CD14-positive monocyte (primary cell): ENCODE measurements at regions of chr18 and their contacts with region 1.

Region 1: GRCh38 chr18:6795307-6795706 is 65.8 kb downstream of the ARHGAP28 start:
- DNase-seq: no peak
- H3K4me3 ChIP-seq: no peak overlapping the region
- H3K4me3 Mint-ChIP-seq: no peak overlapping the region
- H3K27ac ChIP-seq: no peak overlapping the region
- H3K27ac Mint-ChIP-seq: no peak overlapping the region
- H3K4me1 ChIP-seq: no peaks in the 10 kb centered on the region
- H3K4me1 Mint-ChIP-seq: no peaks in the 10 kb centered on the region
- H3K27me3 ChIP-seq: no peaks in the 10 kb centered on the region
- H3K27me3 Mint-ChIP-seq: no peaks in the 10 kb centered on the region
- CTCF ChIP-seq: no peak

Region 2: DNA sequence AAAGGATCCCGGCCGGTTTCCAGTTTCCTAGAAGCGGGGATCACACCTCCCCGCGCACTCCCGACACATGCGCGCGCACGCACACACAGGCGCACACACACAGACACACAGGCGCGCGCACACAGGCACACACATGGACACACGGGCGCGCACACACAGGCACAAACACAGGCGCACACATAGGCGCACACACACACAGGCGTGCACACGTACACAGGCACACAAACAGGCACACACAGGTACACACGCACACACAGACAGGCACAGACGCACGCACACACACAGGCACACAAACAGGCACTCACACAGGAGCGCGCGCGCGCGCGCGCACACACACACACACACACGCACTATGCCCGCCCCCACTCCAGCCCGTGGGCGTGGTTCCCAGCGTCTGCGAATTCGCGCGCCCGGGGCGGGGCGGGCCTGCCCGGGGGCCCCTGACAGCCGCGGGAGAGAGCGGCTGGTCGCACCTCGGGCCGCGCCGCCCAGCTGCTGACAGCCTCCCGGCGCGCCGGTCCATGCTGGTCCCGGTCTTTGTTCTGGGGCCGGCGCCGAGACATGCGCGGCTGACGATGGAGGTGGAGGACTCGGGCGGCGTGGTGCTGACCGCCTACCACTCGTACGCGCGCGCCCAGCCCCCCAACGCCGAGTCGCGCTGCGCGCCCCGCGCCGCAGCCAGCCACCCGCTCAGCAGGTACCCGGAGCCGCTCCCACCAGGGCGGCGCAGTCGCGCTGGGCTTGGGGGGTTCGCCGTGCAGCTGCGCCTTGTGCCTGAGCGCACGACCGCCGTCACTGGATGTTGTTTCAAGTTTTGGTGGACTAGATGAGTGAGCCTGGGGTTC is 65.8 kb before region 1 on chr18 and contains the start of gene ARHGAP28:
- intact Hi-C with region 1: loop called in 1 of 2 experiments (anchors 10 kb)
- DNase-seq: no peak
- H3K4me3 ChIP-seq: peak within 1 kb of the TSS in 1 of 3 experiments; percentile 12
- H3K4me3 Mint-ChIP-seq: peak within 1 kb of the TSS; percentile 60 to 92
- H3K27ac ChIP-seq: no peak within 1 kb of the TSS
- H3K27ac Mint-ChIP-seq: no peak within 1 kb of the TSS
- H3K4me1 ChIP-seq: no peaks in the 10 kb centered on the region
- H3K4me1 Mint-ChIP-seq: peaks cover 8% of the 10 kb centered on the region
- H3K27me3 ChIP-seq: peaks cover 20 to 33% of the 10 kb centered on the region in 2 donors
- H3K27me3 Mint-ChIP-seq: peaks cover 33 to 35% (median 35%) of the 10 kb centered on the region in 3 donors
- CTCF ChIP-seq: no peak
- polyA plus RNA-seq, gene ARHGAP28: not detected

Region 3: DNA sequence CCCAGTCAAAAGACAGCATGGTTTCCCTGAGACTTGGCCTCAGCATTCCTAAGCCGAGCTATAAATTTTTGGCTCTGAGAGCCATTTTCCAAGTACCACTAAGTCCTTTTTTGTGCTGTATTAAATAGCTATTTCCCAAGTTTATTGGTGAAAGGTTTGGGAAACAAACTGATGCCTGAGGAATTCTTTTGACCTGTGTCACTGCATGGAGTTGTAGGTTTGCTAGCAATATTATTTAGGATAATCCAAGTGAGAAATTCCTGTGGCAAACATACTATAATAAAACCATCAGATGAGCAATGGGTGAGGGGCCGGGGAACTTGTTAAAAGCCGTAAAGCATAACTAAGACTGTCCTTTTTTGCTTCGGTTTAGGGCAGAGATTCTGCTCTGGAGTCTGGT is 37.4 kb before region 1 on chr18:
- intact Hi-C with region 1: no loop called
- DNase-seq: no peak
- H3K4me3 ChIP-seq: no peak overlapping the region
- H3K4me3 Mint-ChIP-seq: no peak overlapping the region
- H3K27ac ChIP-seq: no peak overlapping the region
- H3K27ac Mint-ChIP-seq: no peak overlapping the region
- H3K4me1 ChIP-seq: no peaks in the 10 kb centered on the region
- H3K4me1 Mint-ChIP-seq: no peaks in the 10 kb centered on the region
- H3K27me3 ChIP-seq: no peaks in the 10 kb centered on the region
- H3K27me3 Mint-ChIP-seq: no peaks in the 10 kb centered on the region
- CTCF ChIP-seq: no peak